Tibial artery (tissue), 4 donors: ENCODE measurements at regions of chr5 and their contacts with region 1.

Region 1: DNA sequence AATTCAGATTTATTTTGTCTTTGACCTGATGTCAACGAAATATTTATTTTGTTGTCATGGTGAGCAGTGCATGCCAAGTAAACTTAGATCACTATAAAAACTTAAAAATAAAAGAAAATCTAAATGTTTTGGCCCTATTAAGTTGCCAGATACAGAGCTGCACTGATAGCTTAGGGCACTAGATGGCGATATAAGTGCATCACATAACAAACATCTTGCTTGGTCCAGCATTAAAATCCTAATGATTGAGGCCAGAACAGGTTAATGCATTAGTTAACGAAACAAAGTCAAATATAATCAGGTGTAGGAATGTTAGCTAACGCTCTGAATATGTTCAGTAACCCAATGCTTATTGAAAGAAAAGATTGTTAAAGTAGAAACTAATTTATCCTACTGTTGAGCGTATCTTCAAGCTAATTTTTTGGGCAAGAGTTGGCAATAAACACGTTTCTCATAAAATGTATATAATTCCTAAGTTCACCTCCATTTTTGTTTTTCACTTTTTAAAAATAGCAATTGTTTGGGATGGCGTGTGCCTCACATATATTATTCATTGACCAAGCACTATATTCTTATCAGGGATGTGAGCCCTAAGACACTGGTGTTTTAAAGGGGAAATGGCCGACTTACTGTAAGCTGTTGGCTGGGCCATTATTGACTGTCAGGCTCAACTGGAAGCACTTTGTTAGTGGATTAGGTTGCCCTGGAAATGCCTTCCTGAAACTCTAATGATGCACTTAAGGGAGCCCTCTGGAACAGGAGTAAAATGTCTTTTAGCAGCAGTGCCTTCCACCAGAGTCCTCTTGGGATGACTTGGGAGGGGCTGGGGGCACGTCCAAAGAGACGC is 33.3 kb downstream of the KCTD16 start:
- DNase-seq: peak in 1 of 2 donors; percentile 40
- H3K4me3 ChIP-seq: peak overlapping the region in 1 of 2 donors; percentile 58
- H3K27ac ChIP-seq: peak overlapping the region; percentile 60 to 63
- H3K4me1 ChIP-seq: peaks cover 0 to 40% (median 15%) of the 10 kb centered on the region in 4 donors
- H3K27me3 ChIP-seq: no peaks in the 10 kb centered on the region
- CTCF ChIP-seq: peak; percentile 70 to 85

Region 2: DNA sequence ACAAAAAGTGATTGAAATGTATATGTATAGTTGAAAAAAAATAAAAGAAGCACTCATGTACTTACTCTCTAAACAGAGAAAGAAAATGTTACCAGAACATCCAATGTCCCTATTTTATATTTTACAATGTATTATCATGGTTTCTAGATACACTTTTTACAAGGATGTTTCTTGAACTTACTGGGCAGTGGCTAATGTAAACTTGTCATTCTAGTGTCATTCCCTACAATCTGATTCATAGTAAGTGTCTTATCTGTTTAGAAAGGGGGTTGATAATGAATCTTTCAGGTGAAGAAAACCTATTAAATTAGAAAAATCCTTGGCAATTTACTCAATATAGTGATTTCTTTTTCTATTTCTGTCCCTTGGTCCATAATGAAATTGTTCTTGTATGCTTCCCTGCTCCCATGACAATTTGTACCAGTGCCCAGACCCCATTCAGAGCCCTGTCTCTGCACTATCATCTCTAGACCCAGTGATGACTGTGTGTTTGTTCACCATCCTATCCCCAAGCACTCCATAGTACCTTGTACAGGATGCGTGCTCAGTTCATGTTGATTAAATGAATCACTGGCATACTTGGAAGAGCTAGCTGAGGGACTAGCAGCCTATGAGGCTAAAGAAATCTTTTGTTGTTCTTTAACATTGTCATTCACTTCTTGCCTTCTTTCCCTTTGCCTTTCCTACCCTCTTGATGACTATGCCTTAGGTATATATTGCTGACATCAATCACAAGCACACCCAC is 290.8 kb before region 1 on chr5:
- intact Hi-C with region 1: no loop called
- DNase-seq: no peak
- H3K4me3 ChIP-seq: no peak overlapping the region
- H3K27ac ChIP-seq: no peak overlapping the region
- H3K4me1 ChIP-seq: no peaks in the 10 kb centered on the region
- H3K27me3 ChIP-seq: no peaks in the 10 kb centered on the region
- CTCF ChIP-seq: no peak

Region 3: DNA sequence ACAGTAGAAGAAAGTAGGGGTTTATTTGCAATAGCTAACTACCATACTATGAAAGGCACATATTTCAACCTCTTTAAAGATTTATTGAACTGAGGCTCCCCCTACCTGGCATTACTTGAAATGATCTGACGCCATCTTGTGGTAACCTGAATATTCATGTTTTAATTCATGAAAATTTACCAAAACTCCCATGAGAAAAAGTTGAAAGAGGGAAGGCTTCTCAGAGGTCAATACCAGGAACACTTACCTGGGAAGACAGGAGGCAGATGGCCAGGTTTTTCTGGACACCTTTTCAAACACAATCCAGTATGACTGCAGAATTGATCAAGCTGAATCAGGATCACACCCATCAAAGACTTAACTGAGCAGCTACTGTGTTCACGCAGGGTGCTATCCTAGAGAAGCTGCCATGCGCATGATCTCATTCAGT is 1621.8 kb after region 1 on chr5:
- intact Hi-C with region 1: loop called (anchors 5 kb)
- DNase-seq: no peak
- H3K4me3 ChIP-seq: no peak overlapping the region
- H3K27ac ChIP-seq: no peak overlapping the region
- H3K4me1 ChIP-seq: peaks cover 0 to 16% (median 12%) of the 10 kb centered on the region in 4 donors
- H3K27me3 ChIP-seq: no peaks in the 10 kb centered on the region
- CTCF ChIP-seq: peak; percentile 70 to 73

Region 4: GRCh38 chr5:146049014-146049703 is 1845.2 kb after region 1 on chr5:
- intact Hi-C with region 1: loop called (anchors 5 kb)
- DNase-seq: peak in 1 of 2 donors; percentile 45
- H3K4me3 ChIP-seq: no peak overlapping the region
- H3K27ac ChIP-seq: no peak overlapping the region
- H3K4me1 ChIP-seq: no peaks in the 10 kb centered on the region
- H3K27me3 ChIP-seq: no peaks in the 10 kb centered on the region
- CTCF ChIP-seq: peak; percentile 68